Heart right ventricle (tissue), 16 donors: ENCODE measurements at regions of chr12 and their contacts with region 1.

Region 1: GRCh38 chr12:57583008-57583831 is 7.8 kb upstream of the PIP4K2C start:
- DNase-seq: peak in 1 of 2 donors; percentile 80
- ATAC-seq: peak; percentile 90 to 98 (median 95)
- H3K4me3 ChIP-seq: no peak overlapping the region
- H3K27ac ChIP-seq: no peak overlapping the region
- H3K4me1 ChIP-seq: no peaks in the 10 kb centered on the region
- H3K27me3 ChIP-seq: peaks cover 0 to 29% (median 7%) of the 10 kb centered on the region in 7 donors
- CTCF ChIP-seq: peak; percentile 91 to 98 (median 95)

Region 2: DNA sequence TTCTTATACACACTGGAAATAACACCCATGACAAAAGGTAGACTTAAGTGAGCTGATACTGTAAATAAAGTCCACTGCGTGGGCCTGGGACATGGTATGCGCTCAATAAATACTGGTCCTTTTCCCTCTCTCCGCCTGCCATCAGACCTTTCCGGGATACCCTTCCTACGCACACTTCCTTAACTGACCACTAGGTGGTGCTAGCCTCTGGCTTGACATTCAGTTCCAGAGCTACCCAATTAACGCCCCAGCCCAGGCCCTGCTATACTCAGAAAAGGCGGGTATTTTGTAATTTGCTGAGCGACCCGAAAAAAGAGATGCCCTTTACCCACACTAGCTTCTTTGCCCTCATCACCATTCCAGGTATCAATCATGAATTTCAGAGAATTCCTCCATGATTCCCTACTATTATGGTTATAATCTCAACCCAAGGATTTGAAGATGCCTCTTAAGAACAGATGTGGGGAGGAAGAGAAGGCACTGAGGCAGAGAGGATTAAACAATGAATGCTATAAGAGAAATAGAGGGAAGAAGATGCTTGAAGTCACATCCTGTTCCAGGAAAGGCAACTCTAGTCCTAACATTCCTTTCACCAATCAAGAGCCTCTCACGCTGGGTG is 458.9 kb before region 1 on chr12:
- intact Hi-C with region 1: no loop called
- DNase-seq: peak in 1 of 2 donors; percentile 84
- ATAC-seq: peak in 2 of 8 donors; percentile 19 to 32
- H3K4me3 ChIP-seq: no peak overlapping the region
- H3K27ac ChIP-seq: no peak overlapping the region
- H3K4me1 ChIP-seq: peaks cover 0 to 22% (median 8%) of the 10 kb centered on the region in 9 donors
- H3K27me3 ChIP-seq: peaks cover 0 to 15% (median 0%) of the 10 kb centered on the region in 7 donors
- CTCF ChIP-seq: peak; percentile 92 to 99 (median 97)

Region 3: GRCh38 chr12:57429473-57430111 is 153.6 kb before region 1 on chr12:
- intact Hi-C with region 1: no loop called
- DNase-seq: no peak
- ATAC-seq: no peak
- H3K4me3 ChIP-seq: peak overlapping the region; percentile 32 to 80 (median 66)
- H3K27ac ChIP-seq: peak overlapping the region; percentile 85 to 98 (median 94)
- H3K4me1 ChIP-seq: peaks cover 0 to 24% (median 15%) of the 10 kb centered on the region in 9 donors
- H3K27me3 ChIP-seq: no peaks in the 10 kb centered on the region
- CTCF ChIP-seq: no peak

Region 4: GRCh38 chr12:57621497-57622292 is 38.5 kb after region 1 on chr12:
- intact Hi-C with region 1: loop called (anchors 1 to 2 kb)
- DNase-seq: peak; percentile 61 to 75
- ATAC-seq: peak; percentile 64 to 79 (median 72)
- H3K4me3 ChIP-seq: peak overlapping the region; percentile 4 to 60 (median 52)
- H3K27ac ChIP-seq: peak overlapping the region in 2 of 10 donors; percentile 11 to 31
- H3K4me1 ChIP-seq: peaks cover 9 to 50% (median 21%) of the 10 kb centered on the region in 9 donors
- H3K27me3 ChIP-seq: peaks cover 11 to 96% (median 67%) of the 10 kb centered on the region in 7 donors
- CTCF ChIP-seq: peak; percentile 88 to 98 (median 95)

Region 5: DNA sequence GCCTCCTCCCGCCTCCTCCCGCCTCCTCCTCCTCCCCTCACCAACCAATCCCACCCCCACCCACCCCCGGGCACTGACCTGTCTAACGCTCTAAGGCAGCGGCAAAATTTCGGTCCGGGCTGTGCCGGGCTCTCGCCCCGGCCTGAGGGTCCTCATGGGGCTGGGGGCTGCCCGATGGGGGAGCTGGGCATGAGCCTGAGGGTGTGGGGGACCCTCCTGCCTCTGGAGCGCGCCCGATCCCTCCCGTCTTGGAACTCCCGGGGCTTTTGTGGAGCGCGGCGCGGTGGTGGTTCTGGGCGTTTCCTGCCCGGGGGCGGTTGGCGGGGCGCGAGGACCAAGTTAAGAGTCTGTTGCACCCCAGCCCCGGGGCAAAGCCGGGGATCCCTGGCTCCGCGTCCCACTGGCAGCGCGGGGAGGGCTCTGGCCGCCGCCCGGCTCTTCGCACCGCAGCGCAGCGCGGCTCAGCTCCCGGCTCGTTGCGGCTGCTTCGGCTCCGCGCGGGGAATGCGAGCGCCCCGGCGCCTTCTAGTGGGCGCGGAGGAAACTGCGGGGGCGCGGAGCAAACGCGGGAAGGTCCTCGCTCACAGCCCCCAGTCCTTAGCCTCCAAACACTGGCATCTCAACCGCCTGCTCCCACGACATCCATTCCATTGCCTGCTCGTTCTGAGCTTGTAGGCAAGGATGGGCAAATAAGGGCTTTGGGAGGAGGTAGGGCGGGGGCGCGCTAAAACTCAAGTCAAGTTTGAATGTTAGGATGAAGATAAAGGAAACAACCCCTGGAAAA is 49.7 kb after region 1 on chr12 and contains the start of gene B4GALNT1:
- intact Hi-C with region 1: loop called in 2 of 10 experiments (anchors 2 kb)
- DNase-seq: peak; percentile 36 to 71
- ATAC-seq: peak; percentile 80 to 91 (median 88)
- H3K4me3 ChIP-seq: peak within 1 kb of the TSS; percentile 57 to 78 (median 65)
- H3K27ac ChIP-seq: peak within 1 kb of the TSS in 5 of 10 donors; percentile 13 to 49 (median 28)
- H3K4me1 ChIP-seq: peaks cover 0 to 26% (median 17%) of the 10 kb centered on the region in 9 donors
- H3K27me3 ChIP-seq: peaks cover 6 to 85% (median 57%) of the 10 kb centered on the region in 7 donors
- CTCF ChIP-seq: peak; percentile 82 to 94 (median 87)
- total RNA-seq, gene B4GALNT1: 2.0 to 9.3 (median 5.5) TPM

Region 6: GRCh38 chr12:59030398-59030797 is 1447.2 kb after region 1 on chr12:
- intact Hi-C with region 1: no loop called
- DNase-seq: no peak
- ATAC-seq: no peak
- H3K4me3 ChIP-seq: no peak overlapping the region
- H3K27ac ChIP-seq: no peak overlapping the region
- H3K4me1 ChIP-seq: no peaks in the 10 kb centered on the region
- H3K27me3 ChIP-seq: no peaks in the 10 kb centered on the region
- CTCF ChIP-seq: no peak